ENCODE measurements at regions of chr6 and their contacts with region 1.

Region 1: DNA sequence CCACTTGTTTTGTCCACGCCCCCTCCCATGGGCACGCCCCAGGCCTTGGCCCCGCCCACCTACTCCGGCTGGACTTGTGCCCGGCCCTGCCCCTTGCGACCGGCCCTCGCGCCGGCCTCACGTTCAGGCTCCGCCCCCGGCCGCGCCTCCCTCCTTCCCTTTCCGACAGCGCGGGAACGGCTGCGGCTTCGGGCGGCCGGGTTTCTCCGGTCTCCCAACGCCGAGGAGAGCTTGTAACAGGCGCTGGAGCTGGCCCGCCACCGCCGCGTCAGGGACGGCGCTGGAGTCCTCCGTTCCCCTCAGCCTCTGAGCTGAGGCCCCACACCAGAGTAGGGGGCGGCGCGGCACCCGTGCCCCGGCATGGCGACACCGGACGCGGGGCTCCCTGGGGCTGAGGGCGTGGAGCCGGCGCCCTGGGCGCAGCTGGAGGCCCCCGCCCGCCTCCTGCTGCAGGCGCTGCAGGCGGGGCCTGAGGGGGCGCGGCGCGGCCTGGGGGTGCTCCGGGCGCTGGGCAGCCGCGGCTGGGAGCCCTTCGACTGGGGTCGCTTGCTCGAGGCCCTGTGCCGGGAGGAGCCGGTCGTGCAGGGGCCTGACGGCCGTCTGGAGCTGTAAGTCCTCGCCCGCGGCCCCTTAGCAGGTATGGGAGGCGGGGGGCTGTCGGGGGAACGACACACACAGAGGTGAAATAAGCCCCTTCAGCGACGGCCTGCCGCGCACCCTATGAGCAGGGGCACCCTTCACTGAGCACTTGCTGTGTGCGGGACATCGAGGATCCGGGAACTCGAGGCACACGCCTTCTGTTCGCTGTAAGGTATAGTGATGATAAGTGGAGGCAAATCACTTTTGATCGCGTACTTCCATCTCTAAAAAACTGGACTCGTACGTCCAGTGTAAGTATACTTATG is at the start of gene FANCE:
- DNase-seq: peak; percentile 88 to 93
- ATAC-seq: peak; percentile 69 to 72
- H3K4me3 ChIP-seq: peak within 1 kb of the TSS; percentile 62 to 77 (median 72)
- H3K27ac ChIP-seq: peak within 1 kb of the TSS; percentile 81 to 89 (median 82)
- H3K4me1 ChIP-seq: peaks cover 34 to 40% of the 10 kb centered on the region in 2 donors
- H3K27me3 ChIP-seq: no peaks in the 10 kb centered on the region
- CTCF ChIP-seq: peak in 1 of 5 experiments; percentile 12
- POLR2A ChIP-seq: peak; percentile 80 to 86
- total RNA-seq, gene FANCE: 2.5 to 10.5 (median 5.9) TPM

Region 2: DNA sequence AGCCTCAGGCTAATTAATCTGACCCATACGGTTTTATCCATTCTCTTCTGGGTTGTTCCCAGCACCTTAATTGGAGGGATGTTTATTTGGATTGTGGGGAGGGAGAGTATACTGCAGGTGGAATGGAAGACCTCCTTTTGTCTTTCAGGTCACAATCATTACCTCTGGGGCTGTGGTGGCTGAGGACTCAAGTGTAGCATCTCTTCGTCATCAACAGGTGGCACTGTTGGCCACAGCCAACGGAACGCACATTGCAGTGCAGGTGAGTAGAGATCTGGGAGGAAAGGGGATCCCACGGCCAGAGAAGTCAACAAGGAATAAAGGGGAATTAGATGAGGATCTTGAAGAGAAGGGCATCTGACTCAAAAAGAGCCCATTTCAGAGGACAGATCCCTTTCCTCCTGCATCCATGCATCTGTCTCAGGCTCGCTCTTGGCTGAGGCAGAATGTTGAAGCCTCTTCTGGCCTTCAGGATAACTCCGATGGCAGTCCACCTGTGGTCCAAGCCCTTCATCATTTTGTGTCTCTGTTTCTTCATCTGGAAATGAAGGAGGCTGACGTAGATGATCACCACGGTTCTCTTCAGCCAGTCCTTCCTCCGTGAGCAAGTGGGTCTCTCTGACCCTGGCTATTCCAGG is 158.0 kb before region 1 on chr6:
- in situ Hi-C with region 1: no loop called
- intact Hi-C with region 1: loop called (anchors 1 kb)
- DNase-seq: peak in 1 of 2 donors; percentile 48
- ATAC-seq: peak; percentile 53 to 77
- H3K4me3 ChIP-seq: no peak overlapping the region
- H3K27ac ChIP-seq: no peak overlapping the region
- H3K4me1 ChIP-seq: peaks cover 12 to 17% of the 10 kb centered on the region in 2 donors
- H3K27me3 ChIP-seq: no peaks in the 10 kb centered on the region
- CTCF ChIP-seq: peak; percentile 40 to 79 (median 65)
- POLR2A ChIP-seq: no peak

Region 3: GRCh38 chr6:35415065-35415991 is 37.1 kb before region 1 on chr6:
- in situ Hi-C with region 1: no loop called
- intact Hi-C with region 1: loop called (anchors 1 kb)
- DNase-seq: peak; percentile 65 to 78
- ATAC-seq: peak; percentile 92 to 97
- H3K4me3 ChIP-seq: no peak overlapping the region
- H3K27ac ChIP-seq: peak overlapping the region in 2 of 4 donors; percentile 7 to 48
- H3K4me1 ChIP-seq: peaks cover 10 to 16% of the 10 kb centered on the region in 2 donors
- H3K27me3 ChIP-seq: no peaks in the 10 kb centered on the region
- CTCF ChIP-seq: peak; percentile 41 to 79 (median 68)
- POLR2A ChIP-seq: no peak

Region 4: GRCh38 chr6:35435074-35435837 is 17.2 kb before region 1 on chr6:
- in situ Hi-C with region 1: no loop called
- intact Hi-C with region 1: no loop called
- DNase-seq: no peak
- ATAC-seq: peak in 1 of 2 donors; percentile 49
- H3K4me3 ChIP-seq: no peak overlapping the region
- H3K27ac ChIP-seq: peak overlapping the region in 1 of 4 donors; percentile 47
- H3K4me1 ChIP-seq: peaks cover 10 to 14% of the 10 kb centered on the region in 2 donors
- H3K27me3 ChIP-seq: no peaks in the 10 kb centered on the region
- CTCF ChIP-seq: no peak
- POLR2A ChIP-seq: no peak

Region 5: DNA sequence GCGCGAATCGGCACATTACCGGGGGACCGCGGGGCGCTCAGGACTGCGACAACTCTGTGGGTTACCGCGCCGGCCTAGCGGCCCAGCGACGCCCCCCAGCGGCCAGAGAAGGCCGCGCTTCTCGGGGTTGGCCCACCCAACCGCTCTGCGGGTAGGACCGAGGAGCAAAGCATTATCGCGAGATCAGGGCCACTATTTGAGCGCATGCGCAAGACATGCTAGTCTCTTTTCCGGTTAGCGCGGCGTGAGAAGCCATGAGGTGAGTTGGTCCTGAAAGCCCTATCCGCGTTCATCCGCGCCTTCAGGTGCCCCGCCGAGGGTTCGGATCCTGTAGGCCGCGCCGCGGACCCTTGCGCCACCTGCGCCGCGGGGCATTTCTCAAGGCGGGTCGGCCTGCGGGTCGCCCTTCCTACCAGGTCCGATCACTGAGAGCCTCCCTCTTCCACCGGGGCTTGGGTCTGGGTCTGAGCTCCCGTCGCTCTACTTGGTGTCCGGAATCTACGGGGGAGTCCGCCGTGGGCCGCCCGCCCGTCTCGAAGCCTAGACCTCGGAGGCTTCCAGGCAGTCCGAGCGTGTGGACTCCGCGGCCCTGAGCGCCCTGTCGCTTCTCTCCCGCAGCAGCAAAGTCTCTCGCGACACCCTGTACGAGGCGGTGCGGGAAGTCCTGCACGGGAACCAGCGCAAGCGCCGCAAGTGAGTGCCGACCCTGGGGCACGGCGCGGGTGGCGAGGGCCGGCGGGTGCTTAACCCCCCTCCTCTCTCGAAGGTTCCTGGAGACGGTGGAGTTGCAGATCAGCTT is 15.9 kb after region 1 on chr6 and contains the start of gene RPL10A:
- in situ Hi-C with region 1: no loop called
- intact Hi-C with region 1: loop called (anchors 1 kb)
- DNase-seq: peak; percentile 96 to 97
- ATAC-seq: peak; percentile 93 to 95
- H3K4me3 ChIP-seq: peak within 1 kb of the TSS; percentile 63 to 81 (median 72)
- H3K27ac ChIP-seq: peak within 1 kb of the TSS; percentile 87 to 92 (median 90)
- H3K4me1 ChIP-seq: peaks cover 21 to 32% of the 10 kb centered on the region in 2 donors
- H3K27me3 ChIP-seq: no peaks in the 10 kb centered on the region
- CTCF ChIP-seq: peak; percentile 98 to 99 (median 98)
- POLR2A ChIP-seq: peak; percentile 97 to 98
- total RNA-seq, gene RPL10A: 772 to 1,014 (median 808) TPM